Posterior cingulate gyrus (tissue), 11 donors: ENCODE measurements at regions of chr3 and their contacts with region 1.

Region 1: DNA sequence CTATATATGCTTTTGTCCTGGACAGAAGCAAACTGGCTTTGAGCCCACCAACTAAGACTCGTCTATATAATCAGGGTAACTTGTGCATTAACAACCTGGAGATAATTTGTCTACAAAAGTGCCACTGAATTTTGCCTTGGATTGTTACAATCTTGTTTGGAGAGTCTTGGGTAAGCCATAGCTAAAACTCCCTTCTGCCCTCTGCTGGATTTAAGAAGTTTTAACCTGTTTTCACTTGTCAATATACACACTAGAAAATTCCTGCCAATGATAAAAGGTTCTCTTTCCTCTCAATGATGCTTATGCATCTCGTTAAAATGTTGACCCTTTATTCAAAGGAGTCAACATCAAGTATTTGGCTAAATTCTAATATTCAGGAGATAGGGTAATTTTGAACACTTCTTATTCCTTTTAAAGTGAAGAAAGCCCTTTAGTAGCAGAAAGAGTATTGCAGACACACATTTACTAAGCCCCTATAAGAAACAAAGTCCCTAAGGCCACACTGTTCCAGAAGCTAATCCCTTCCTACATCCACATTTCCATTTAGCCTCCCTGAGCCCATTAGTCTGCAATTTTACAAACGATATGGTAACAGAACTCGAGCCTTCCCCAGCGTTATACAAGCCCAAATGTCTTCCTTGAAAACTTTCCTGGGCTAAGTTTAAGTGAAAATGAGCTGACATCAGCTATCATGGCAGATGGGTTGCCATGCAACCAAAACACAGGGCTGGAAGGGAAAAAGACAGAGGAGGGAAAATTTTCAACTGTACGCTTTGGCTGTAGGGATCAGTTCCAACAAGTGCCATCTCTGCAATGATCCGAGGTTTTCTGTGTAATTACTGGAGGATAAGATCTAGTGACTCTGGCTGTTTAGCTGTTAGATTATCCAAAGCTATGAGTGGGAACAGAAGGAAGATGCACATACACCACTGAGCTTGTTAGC is 75.9 kb upstream of the FGF12 start:
- DNase-seq: peak in 1 of 10 donors; percentile 26

Region 2: GRCh38 chr3:192467230-192468140 is 335.7 kb before region 1 on chr3:
- intact Hi-C with region 1: loop called (anchors 5 kb)
- DNase-seq: peak in 7 of 10 donors; percentile 50 to 89 (median 60)